Activated naive CD4-positive, alpha-beta T cell treated with anti-CD3 and anti-CD28 coated beads for 36 hours (primary cell): ENCODE measurements at regions of chr11 and their contacts with region 1.

Region 1: DNA sequence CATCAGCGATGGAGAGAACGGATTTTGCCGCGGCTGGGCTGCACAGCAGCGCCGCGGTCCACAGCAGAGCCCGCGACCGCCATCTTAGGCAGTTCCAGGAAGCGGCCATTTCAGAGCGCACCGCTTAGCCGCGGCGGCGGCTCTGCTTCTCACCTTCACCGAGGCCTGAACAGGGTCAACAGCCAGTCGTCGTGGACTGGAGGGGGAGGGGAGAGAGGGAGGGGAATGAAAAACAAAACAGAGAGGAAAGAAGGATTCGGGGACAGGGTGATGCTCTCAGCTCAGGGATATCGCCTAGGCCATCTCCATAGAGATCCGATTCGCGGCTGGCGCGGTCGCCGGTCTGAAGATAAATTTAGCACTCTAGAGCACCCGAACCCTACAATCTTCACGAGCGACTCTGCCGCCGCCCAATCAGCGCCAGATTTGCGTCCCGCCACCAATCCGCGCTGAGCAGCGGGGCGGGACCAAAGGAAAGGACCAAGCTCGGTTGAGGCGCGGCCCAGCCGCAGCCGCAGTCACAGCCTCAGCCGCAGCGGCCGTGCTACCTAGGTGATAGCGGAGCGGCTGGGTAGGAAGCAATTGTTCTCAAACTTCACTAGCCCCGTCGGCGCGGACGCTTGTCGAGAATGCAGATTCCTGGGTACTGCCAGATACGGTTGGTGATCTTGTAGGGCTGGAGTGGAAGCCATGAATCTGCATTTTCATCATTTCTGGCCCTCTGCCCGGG is at the start of gene ZBED5:
- DNase-seq: peak; percentile 96
- H3K4me3 Mint-ChIP-seq: peak within 1 kb of the TSS; percentile 100
- H3K27ac Mint-ChIP-seq: peak within 1 kb of the TSS; percentile 100
- H3K4me1 Mint-ChIP-seq: peaks cover 46% of the 10 kb centered on the region
- H3K27me3 Mint-ChIP-seq: no peaks in the 10 kb centered on the region
- total RNA-seq, gene ZBED5: 50.4 to 52.4 TPM

Region 2: DNA sequence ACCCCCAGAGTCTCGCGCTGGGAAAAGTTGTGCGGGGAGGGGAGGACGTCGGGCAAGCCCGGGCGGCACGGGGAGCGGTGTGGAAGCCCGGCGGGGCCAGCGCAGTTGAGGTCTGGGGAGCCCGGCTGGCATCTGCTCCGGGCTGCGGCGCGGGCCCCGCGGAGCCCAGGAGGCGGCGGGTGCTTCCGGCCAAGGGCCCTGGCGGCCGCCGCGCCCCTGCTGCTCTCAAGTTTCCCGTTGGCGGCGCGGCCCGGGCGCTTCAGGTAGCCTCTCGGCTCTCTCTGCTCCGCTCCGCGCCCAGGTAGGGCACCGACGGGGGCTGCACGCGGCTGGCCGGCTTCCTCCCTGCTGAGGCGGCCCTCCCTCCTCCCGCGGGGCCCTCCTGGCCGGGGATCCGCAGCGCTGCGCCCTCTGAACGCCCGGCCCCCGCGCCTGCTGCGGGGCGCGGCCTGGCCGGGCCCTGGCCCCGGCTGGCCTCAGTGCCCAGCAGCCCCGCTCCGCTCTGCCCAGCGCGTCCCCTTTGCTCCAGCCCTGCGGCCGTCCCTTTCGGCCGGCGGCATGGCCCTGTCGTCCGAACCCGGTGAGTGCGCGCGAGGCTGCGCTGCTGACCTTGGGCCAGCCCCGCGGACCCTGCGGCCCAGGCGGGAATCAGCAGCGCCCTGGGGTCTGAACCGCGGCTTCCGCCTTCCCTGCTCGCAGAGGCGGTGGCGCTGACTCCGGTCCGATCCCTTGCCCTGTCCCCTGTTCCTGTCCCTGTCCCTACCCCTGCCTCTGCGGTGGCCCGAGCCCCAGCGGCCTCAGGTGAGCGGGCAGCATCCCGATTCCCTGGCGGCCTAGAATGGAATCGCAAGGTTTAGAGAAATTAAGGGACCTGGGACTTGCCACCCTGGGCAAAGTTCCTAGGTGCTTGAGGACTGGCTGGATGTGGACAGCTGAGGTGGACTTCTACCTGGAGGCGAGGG is 407.1 kb before region 1 on chr11:
- CTCF ChIA-PET with region 1: no interaction called
- intact Hi-C with region 1: loop called (anchors 2 kb)
- DNase-seq: peak; percentile 67
- H3K4me3 Mint-ChIP-seq: peak overlapping the region; percentile 85
- H3K27ac Mint-ChIP-seq: peak overlapping the region; percentile 86
- H3K4me1 Mint-ChIP-seq: peaks cover 54% of the 10 kb centered on the region
- H3K27me3 Mint-ChIP-seq: no peaks in the 10 kb centered on the region

Region 3: DNA sequence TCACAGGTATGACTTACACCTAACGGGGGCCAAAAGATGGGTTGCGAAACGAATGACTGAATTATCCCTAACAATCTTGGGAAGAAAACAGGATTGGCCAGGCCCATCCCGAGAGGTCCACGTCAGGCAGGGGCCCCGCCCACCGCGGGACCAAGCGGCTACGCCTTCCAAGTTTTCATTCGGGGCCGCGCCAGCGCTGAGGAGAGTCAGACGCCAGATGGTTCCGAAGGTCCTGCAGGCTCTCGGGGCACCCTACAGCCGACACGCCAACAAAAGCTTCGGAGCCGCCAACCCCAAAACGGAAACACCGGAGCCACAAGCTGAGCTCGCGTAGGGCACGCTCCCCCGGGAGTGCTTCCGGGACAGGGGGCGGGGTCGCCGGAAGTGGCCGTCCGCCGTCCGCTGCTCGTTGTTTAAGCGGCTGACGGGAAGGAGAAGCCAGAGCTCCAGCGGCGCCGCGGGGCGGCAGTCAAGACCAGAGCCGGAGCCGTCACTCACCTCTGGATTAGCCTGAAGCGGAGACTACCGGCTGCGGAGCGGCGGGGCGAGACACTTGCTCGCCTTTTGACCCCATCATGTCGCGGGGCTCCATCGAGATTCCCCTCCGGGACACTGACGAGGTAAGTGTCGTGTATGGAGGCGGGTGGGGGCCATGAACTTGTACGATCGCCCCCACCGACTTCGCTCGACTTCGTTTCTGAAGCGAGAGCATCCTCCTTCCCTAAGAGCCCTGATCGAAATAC is 106.9 kb before region 1 on chr11 and contains the start of gene CTR9:
- CTCF ChIA-PET with region 1: no interaction called
- intact Hi-C with region 1: loop called (anchors 1 kb)
- DNase-seq: peak; percentile 95
- H3K4me3 Mint-ChIP-seq: peak within 1 kb of the TSS; percentile 93
- H3K27ac Mint-ChIP-seq: peak within 1 kb of the TSS; percentile 87
- H3K4me1 Mint-ChIP-seq: peaks cover 14% of the 10 kb centered on the region
- H3K27me3 Mint-ChIP-seq: no peaks in the 10 kb centered on the region
- total RNA-seq, gene CTR9: 28.7 to 29.7 TPM

Region 4: GRCh38 chr11:10808553-10809372 is 49.1 kb before region 1 on chr11 and contains the start of gene EIF4G2:
- CTCF ChIA-PET with region 1: interaction called, 18 read pairs
- intact Hi-C with region 1: loop called (anchors 1 kb)
- DNase-seq: peak; percentile 98
- H3K4me3 Mint-ChIP-seq: peak within 1 kb of the TSS; percentile 95
- H3K27ac Mint-ChIP-seq: peak within 1 kb of the TSS; percentile 97
- H3K4me1 Mint-ChIP-seq: peaks cover 43% of the 10 kb centered on the region
- H3K27me3 Mint-ChIP-seq: no peaks in the 10 kb centered on the region
- total RNA-seq, gene EIF4G2: 640 to 734 TPM

Region 5: GRCh38 chr11:10878408-10879214 is 20.7 kb after region 1 on chr11:
- CTCF ChIA-PET with region 1: interaction called, 4 read pairs
- intact Hi-C with region 1: loop called (anchors 1 kb)
- DNase-seq: peak; percentile 21
- H3K4me3 Mint-ChIP-seq: no peak overlapping the region
- H3K27ac Mint-ChIP-seq: peak overlapping the region; percentile 34
- H3K4me1 Mint-ChIP-seq: peaks cover 20% of the 10 kb centered on the region
- H3K27me3 Mint-ChIP-seq: no peaks in the 10 kb centered on the region

Region 6: GRCh38 chr11:10900681-10901415 is 43.0 kb after region 1 on chr11:
- CTCF ChIA-PET with region 1: no interaction called
- intact Hi-C with region 1: loop called (anchors 2 kb)
- DNase-seq: no peak
- H3K4me3 Mint-ChIP-seq: no peak overlapping the region
- H3K27ac Mint-ChIP-seq: no peak overlapping the region
- H3K4me1 Mint-ChIP-seq: peaks cover 17% of the 10 kb centered on the region
- H3K27me3 Mint-ChIP-seq: no peaks in the 10 kb centered on the region

Region 7: GRCh38 chr11:11148104-11148509 is 290.2 kb after region 1 on chr11:
- CTCF ChIA-PET with region 1: no interaction called
- intact Hi-C with region 1: loop called (anchors 5 kb)
- DNase-seq: peak; percentile 72
- H3K4me3 Mint-ChIP-seq: no peak overlapping the region
- H3K27ac Mint-ChIP-seq: no peak overlapping the region
- H3K4me1 Mint-ChIP-seq: peaks cover 43% of the 10 kb centered on the region
- H3K27me3 Mint-ChIP-seq: no peaks in the 10 kb centered on the region